IMR-90 (cell line): ENCODE measurements at regions of chr6 and their contacts with region 1.

Region 1: DNA sequence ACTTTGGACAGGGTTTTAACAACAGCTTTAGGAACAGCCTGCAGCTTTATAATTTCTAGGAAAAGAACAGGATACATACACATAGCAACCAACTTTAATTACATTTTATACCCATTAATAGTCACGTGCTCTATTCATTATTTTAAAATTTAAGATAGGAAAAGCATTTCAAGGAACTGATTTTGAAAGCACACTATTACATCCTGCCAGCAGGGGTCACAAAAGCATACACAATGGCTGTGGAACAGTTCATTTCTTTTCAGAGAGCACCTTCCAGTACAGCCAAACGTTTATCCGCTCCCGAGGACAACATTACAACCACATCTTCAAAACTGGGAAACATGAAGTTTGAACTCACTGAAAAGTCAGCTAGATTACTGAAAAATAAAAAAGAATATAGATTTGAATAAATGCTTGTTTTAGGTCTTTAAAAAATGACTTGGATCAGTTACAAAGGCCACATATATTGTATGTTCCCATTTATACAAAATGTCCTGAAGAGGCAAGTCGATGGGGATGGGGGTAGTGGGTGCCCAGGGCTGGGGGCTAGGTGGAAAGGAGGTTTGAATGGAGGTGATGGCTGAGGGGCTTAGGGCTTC is 104.6 kb upstream of the EXOC2 start:
- DNase-seq: peak; percentile 67
- ATAC-seq: peak; percentile 87
- H3K4me3 ChIP-seq: no peak overlapping the region
- H3K27ac ChIP-seq: no peak overlapping the region
- H3K4me1 ChIP-seq: no peaks in the 10 kb centered on the region
- H3K27me3 ChIP-seq: peaks cover 38% of the 10 kb centered on the region
- CTCF ChIP-seq: peak; percentile 86
- POLR2A ChIP-seq: no peak
- RAD21 ChIP-seq: peak; percentile 90

Region 2: DNA sequence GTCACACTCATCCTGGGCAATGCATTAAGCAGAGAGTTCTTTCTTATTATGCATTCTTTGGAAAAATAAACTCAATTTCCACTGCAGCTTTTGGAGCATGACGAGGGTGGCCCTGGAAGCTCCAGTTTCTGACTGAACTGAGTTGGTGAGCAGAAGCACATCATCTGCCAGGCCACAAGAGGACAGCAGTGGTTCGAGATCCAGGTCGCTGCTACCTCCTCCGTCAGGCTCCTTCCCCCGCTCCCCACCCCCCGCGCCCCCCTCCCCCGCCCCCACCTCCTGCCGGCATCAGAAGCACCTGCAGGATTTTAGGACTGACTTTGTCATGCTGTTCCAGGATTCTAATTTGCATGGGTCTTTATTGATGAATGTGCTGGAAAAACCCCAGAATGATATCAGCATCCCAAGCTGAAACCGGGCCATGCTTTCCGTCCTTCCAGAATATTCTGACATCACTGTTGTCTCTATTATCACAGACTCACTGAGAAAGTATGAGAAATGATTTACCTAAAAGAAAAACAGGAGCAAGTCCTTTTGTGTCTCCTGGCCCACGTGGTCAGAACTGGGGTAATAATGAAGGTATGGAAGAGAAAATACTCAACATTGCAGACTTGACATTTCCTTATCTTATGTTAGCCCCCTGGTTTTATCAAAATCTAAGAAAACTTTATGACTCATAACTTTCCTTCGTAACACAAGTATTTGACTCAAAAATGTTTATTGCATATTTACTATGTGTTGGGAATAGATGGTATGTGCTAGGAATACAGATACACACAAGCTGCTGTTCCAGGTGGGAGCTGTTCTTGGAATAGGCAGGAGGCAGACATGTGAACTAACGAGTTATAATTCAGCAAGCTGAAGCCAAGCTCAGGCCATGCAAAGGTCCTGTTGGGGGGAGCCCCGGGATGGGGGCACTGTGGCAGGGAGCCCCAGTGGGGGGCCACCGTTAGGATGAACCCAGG is 115.6 kb after region 1 on chr6:
- CTCF ChIA-PET with region 1: interaction called, 4 read pairs
- POLR2A ChIA-PET with region 1: no interaction called
- dilution Hi-C with region 1: no loop called
- in situ Hi-C with region 1: no loop called
- intact Hi-C with region 1: loop called (anchors 5 kb)
- DNase-seq: peak; percentile 47
- ATAC-seq: peak; percentile 88
- H3K4me3 ChIP-seq: no peak overlapping the region
- H3K27ac ChIP-seq: no peak overlapping the region
- H3K4me1 ChIP-seq: peaks cover 4% of the 10 kb centered on the region; the same call in 1 of the 2 replicates
- H3K27me3 ChIP-seq: peaks cover 12% of the 10 kb centered on the region
- CTCF ChIP-seq: peak; percentile 69
- POLR2A ChIP-seq: no peak
- RAD21 ChIP-seq: peak; percentile 78

Region 3: GRCh38 chr6:1024587-1024986 is 227.0 kb after region 1 on chr6:
- CTCF ChIA-PET with region 1: no interaction called
- POLR2A ChIA-PET with region 1: no interaction called
- dilution Hi-C with region 1: no loop called
- in situ Hi-C with region 1: no loop called
- intact Hi-C with region 1: no loop called
- DNase-seq: peak; percentile 82
- ATAC-seq: peak; percentile 86
- H3K4me3 ChIP-seq: no peak overlapping the region
- H3K27ac ChIP-seq: peak overlapping the region; percentile 23; the same call in 1 of the 2 replicates
- H3K4me1 ChIP-seq: peaks cover 10% of the 10 kb centered on the region; the same call in 1 of the 2 replicates
- H3K27me3 ChIP-seq: 0 out of 2 replicates have a peak, but pooled peaks cover 3% of the 10 kb centered on the region
- CTCF ChIP-seq: no peak
- POLR2A ChIP-seq: no peak
- RAD21 ChIP-seq: no peak

Region 4: GRCh38 chr6:1311400-1312202 is 514.0 kb after region 1 on chr6 and contains the start of gene FOXQ1:
- CTCF ChIA-PET with region 1: no interaction called
- POLR2A ChIA-PET with region 1: no interaction called
- dilution Hi-C with region 1: no loop called
- in situ Hi-C with region 1: no loop called
- intact Hi-C with region 1: loop called (anchors 2 kb)
- DNase-seq: peak; percentile 40
- ATAC-seq: peak; percentile 52
- H3K4me3 ChIP-seq: peak within 1 kb of the TSS; percentile 37
- H3K27ac ChIP-seq: no peak within 1 kb of the TSS
- H3K4me1 ChIP-seq: no peaks in the 10 kb centered on the region
- H3K27me3 ChIP-seq: peaks cover 71% of the 10 kb centered on the region
- CTCF ChIP-seq: no peak
- POLR2A ChIP-seq: no peak
- RAD21 ChIP-seq: no peak
- total RNA-seq, gene FOXQ1: not detected in 2 replicates

Region 5: DNA sequence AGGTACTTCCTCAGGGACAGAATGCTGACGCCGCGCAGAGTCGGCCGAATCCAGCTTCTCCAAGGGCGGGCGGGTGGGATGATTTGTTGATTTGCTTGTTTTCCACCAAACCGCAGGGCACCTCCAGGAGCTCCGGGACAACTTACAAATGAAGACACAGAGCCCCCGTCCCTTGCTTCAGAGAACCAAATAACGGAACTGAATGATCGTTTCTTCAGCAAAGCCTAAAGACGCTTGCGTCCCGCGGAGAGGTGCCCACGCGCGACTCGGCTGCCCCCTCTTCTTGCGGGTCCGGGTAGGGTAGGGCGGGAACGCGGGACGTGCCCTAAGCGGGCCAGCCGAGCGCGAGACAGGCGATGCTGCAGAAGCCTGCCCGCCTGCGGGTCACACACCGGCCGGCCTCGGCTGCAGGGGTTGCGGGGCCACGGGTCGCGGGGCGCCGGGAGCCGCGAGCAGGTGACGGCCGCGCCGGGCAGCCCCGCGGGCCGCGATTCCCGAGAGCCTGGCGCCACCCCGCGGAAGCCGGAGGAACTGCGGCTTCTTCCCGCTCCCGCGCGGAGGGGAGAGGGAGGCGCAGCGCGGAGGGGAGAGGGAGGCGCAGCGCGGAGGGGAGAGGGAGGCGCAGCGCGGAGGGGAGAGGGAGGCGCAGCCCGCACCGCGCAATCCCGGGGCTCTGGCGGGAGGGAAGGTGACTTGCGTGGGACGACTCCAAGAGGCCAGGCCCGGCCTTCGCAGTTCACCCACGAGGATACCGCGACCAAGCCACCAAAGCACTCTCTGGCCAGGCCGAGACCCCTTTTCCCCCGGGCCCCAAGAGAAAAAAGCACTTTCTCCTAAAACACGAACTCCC is 584.1 kb after region 1 on chr6:
- CTCF ChIA-PET with region 1: no interaction called
- POLR2A ChIA-PET with region 1: no interaction called
- dilution Hi-C with region 1: no loop called
- in situ Hi-C with region 1: loop called (anchors 5 kb)
- intact Hi-C with region 1: loop called (anchors 1 kb)
- DNase-seq: no peak
- ATAC-seq: peak; percentile 94
- H3K4me3 ChIP-seq: peak overlapping the region; percentile 44
- H3K27ac ChIP-seq: no peak overlapping the region
- H3K4me1 ChIP-seq: peaks cover 8% of the 10 kb centered on the region; the same call in 1 of the 2 replicates
- H3K27me3 ChIP-seq: peaks cover 46% of the 10 kb centered on the region
- CTCF ChIP-seq: peak; percentile 76
- POLR2A ChIP-seq: 0 out of 2 replicates have a peak, but pooled peaks have one; percentile 24
- RAD21 ChIP-seq: peak; percentile 87

Region 6: DNA sequence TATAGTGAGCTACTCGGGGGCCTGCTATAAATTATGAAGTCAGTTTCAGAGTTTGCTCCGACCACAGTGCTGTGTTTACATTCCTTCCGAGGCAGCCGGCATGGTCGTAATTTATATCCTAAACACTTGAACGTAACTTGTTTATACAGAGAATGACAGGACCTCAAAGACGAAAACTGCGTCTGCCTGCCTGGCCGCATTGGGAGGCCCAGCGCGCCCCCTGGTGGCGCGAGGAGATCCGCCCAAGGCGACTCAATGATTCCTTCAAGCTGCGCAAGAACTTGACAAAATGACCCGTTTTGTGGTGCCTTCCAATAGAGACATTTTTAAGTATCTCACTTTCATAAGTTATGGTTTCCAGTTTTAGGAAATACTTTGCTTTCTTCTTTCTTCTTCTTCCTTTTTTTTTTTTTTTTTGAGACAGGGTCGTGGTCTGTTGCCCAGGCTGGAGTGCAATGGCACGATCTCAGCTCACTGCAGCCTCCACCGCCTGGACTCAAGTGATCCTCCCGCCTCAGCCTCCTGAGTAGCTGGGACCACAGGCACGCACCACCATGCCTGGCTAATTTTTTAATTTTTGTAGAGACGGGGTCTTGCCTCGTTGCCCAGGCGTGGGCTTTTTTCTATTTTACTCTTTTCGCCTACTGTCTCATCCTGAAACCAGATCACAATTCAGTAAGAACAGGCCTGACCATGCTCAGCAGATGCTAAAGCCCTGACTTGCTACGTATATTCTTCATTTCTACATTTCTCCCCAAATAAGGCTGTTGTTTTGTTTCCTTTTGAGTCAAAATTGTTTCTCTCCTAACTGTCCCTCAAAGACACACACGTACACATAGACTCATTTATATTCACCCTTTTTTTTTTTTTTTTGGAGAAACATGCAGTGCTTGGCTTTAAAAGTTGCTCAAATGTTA is 599.6 kb after region 1 on chr6:
- CTCF ChIA-PET with region 1: interaction called, 3 read pairs
- POLR2A ChIA-PET with region 1: interaction called, 3 read pairs
- dilution Hi-C with region 1: no loop called
- in situ Hi-C with region 1: no loop called
- intact Hi-C with region 1: loop called (anchors 1 kb)
- DNase-seq: peak; percentile 98
- ATAC-seq: peak; percentile 55
- H3K4me3 ChIP-seq: no peak overlapping the region
- H3K27ac ChIP-seq: no peak overlapping the region
- H3K4me1 ChIP-seq: peaks cover 19% of the 10 kb centered on the region
- H3K27me3 ChIP-seq: no peaks in the 10 kb centered on the region; the same call in 1 of the 2 replicates
- CTCF ChIP-seq: peak; percentile 98
- POLR2A ChIP-seq: peak; percentile 46; the same call in 1 of the 2 replicates
- RAD21 ChIP-seq: peak; percentile 93

Region 7: DNA sequence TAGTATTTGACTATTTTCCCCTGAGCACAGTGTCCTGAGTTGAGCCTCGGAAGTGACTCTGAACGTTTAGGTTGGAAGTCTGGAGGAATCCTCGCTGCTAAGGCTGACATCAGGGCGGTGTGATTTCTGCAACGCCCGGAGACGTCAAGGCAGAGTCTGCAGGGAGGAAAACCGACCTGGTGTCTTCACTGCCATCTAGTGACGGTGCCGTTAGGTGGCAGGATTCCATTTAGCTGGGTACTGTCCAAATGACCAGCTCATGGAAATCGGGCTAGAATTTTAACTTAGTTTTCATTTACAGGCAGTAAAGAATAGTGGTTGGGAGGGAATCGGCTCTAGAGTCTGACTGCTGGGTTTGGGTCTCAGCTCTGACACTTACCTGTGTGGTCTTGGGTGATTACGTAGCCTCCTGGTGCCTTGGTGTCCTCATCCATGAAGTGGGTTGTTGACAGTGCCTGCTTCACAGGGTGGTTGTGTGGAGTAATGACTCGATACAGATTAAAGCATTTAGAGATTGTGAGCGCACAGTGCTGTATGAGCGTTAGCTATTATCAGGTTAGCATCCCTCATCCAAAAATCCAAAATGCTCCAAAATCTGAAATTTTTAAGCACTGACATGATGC is 626.8 kb after region 1 on chr6:
- CTCF ChIA-PET with region 1: interaction called, 3 read pairs
- POLR2A ChIA-PET with region 1: no interaction called
- dilution Hi-C with region 1: no loop called
- in situ Hi-C with region 1: no loop called
- intact Hi-C with region 1: loop called (anchors 1 kb)
- DNase-seq: peak; percentile 77
- ATAC-seq: peak; percentile 98
- H3K4me3 ChIP-seq: no peak overlapping the region
- H3K27ac ChIP-seq: no peak overlapping the region
- H3K4me1 ChIP-seq: peaks cover 5% of the 10 kb centered on the region
- H3K27me3 ChIP-seq: peaks cover 8% of the 10 kb centered on the region; the same call in 1 of the 2 replicates
- CTCF ChIP-seq: peak; percentile 80
- POLR2A ChIP-seq: no peak
- RAD21 ChIP-seq: peak; percentile 73

Region 8: GRCh38 chr6:1436334-1437306 is 639.0 kb after region 1 on chr6:
- CTCF ChIA-PET with region 1: interaction called, 5 read pairs
- POLR2A ChIA-PET with region 1: no interaction called
- dilution Hi-C with region 1: no loop called
- in situ Hi-C with region 1: no loop called
- intact Hi-C with region 1: loop called (anchors 1 kb)
- DNase-seq: peak; percentile 72
- ATAC-seq: peak; percentile 99
- H3K4me3 ChIP-seq: no peak overlapping the region
- H3K27ac ChIP-seq: no peak overlapping the region
- H3K4me1 ChIP-seq: no peaks in the 10 kb centered on the region
- H3K27me3 ChIP-seq: peaks cover 20% of the 10 kb centered on the region
- CTCF ChIP-seq: peak; percentile 90
- POLR2A ChIP-seq: no peak
- RAD21 ChIP-seq: peak; percentile 84